Endothelial cell of umbilical vein (primary cell): ENCODE measurements at regions of chr12 and their contacts with region 1.

Region 1: DNA sequence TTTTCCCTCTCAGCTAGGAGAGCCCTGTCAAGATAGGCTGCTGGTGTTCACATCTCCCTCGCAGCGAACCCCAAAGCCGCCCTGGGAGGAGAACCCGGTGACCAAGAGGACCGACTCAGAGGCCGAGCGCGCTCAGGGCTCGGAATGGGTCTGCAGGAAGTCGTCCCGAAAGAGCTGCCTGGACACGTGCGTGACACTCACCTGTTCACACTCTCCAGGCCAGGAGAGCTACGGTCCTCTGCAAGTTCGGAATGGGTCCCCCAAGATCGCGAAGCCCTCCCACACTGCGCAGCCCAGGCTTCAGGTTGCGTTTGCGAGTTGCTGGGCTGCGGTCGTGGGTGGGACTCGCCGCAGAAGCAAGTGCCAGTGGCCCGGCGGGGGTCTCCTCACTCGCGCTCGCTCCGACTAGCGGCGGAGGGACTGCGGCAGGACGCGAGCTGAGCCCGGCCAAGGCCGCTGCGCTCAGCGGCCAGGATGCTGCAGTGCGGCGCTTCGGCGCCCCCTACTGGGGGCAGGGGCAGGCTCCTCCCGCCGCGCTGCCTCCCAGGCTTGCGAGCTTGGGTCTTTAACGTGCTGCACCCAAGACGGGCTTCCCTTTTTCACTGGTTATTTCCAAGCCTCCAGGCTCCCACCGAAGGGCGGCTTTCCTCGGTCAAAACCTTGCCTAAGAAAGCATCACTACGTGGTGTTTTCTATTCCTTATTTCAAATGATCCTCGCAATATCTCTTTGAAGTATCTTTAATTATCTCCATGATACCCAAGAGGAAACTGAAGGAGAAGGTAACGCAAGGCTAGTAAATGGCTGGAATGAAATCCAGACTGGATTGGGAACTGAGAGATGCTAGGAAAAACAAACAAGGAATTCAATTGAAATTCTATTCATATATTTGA is at the start of gene RERG:
- DNase-seq: peak; percentile 78
- H3K4me3 ChIP-seq: peak within 1 kb of the TSS in 2 of 3 experiments; percentile 3 to 32
- H3K27ac ChIP-seq: no peak within 1 kb of the TSS
- H3K4me1 ChIP-seq: peaks cover 7% of the 10 kb centered on the region
- H3K27me3 ChIP-seq: peaks cover 5 to 16% of the 10 kb centered on the region in 2 experiments
- CTCF ChIP-seq: peak; percentile 99
- POLR2A ChIP-seq: no peak
- total RNA-seq, gene RERG: not detected in 2 replicates

Region 2: GRCh38 chr12:14723763-14724162 is 497.5 kb before region 1 on chr12:
- CTCF ChIA-PET with region 1: interaction called, 56 read pairs
- POLR2A ChIA-PET with region 1: no interaction called
- dilution Hi-C with region 1: no loop called
- intact Hi-C with region 1: loop called (anchors 1 kb)
- DNase-seq: peak; percentile 56
- H3K4me3 ChIP-seq: no peak overlapping the region
- H3K27ac ChIP-seq: no peak overlapping the region
- H3K4me1 ChIP-seq: no peaks in the 10 kb centered on the region
- H3K27me3 ChIP-seq: peaks cover 0 to 2% of the 10 kb centered on the region in 2 experiments
- CTCF ChIP-seq: peak; percentile 57 to 75
- POLR2A ChIP-seq: no peak

Region 3: DNA sequence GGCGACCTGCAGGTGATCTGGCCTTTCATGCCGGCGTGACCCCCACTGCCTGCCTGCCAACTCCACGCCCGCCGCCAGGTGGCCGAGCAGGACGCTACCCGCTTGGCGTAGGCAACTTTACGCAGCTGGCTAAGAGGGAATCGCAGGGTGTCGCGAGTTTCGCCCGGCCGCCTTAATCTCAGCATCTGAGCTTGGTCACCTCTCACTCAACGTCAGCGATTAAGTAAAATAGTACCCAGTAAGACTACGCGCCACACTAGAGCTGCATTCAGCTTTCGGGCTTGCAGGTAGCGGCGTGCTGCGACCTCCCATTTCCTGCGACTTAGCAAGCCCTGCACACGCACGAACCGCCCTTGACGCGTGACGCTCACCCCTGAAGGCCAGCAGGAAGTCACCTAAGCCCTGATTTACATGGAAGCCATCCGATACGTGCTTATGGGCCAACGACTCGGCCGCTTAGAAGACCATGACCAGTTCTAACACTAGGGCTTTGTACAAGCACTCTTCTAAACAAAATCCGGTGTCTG is 451.2 kb before region 1 on chr12:
- CTCF ChIA-PET with region 1: interaction called, 15 read pairs
- POLR2A ChIA-PET with region 1: no interaction called
- dilution Hi-C with region 1: no loop called
- intact Hi-C with region 1: loop called (anchors 1 kb)
- DNase-seq: peak; percentile 77
- H3K4me3 ChIP-seq: peak overlapping the region; percentile 22 to 82 (median 70)
- H3K27ac ChIP-seq: peak overlapping the region; percentile 91
- H3K4me1 ChIP-seq: peaks cover 7% of the 10 kb centered on the region
- H3K27me3 ChIP-seq: no peaks in the 10 kb centered on the region
- CTCF ChIP-seq: peak; percentile 73 to 87
- POLR2A ChIP-seq: peak; percentile 25

Region 4: DNA sequence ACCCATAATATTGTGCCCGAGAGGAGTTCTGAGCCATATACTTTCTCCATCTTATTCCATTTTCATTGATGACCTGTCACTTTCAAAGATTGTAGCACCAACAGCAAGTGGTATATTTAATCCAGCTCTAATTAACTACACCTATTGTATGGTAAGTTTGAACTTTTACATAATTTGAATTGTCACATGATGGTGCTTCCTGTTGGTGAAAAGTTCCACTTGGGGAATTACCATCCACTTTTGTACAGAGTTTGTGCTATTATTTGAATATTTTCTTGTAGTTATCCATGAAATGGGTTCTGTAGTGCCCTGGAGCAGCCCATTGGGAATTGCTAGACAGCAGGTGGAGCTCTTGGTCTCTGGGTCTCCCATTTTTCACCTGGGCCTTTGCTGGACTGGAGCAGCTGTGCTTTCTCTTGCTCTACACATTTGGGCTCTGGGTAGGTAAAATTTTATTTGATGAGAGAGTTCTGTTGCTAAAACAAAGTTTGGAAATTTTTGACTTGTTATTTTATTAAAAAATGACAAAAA is 410.2 kb before region 1 on chr12:
- CTCF ChIA-PET with region 1: interaction called, 29 read pairs
- POLR2A ChIA-PET with region 1: no interaction called
- dilution Hi-C with region 1: no loop called
- intact Hi-C with region 1: loop called (anchors 1 kb)
- DNase-seq: peak; percentile 54
- H3K4me3 ChIP-seq: no peak overlapping the region
- H3K27ac ChIP-seq: no peak overlapping the region
- H3K4me1 ChIP-seq: no peaks in the 10 kb centered on the region
- H3K27me3 ChIP-seq: no peaks in the 10 kb centered on the region
- CTCF ChIP-seq: peak; percentile 57 to 61
- POLR2A ChIP-seq: no peak

Region 5: GRCh38 chr12:15151161-15152120 is 69.8 kb before region 1 on chr12:
- CTCF ChIA-PET with region 1: interaction called, 42 read pairs
- POLR2A ChIA-PET with region 1: no interaction called
- dilution Hi-C with region 1: no loop called
- intact Hi-C with region 1: loop called (anchors 1 kb)
- DNase-seq: peak; percentile 50
- H3K4me3 ChIP-seq: no peak overlapping the region
- H3K27ac ChIP-seq: no peak overlapping the region
- H3K4me1 ChIP-seq: no peaks in the 10 kb centered on the region
- H3K27me3 ChIP-seq: peaks cover 0 to 2% of the 10 kb centered on the region in 2 experiments
- CTCF ChIP-seq: peak; percentile 9 to 40
- POLR2A ChIP-seq: no peak

Region 6: DNA sequence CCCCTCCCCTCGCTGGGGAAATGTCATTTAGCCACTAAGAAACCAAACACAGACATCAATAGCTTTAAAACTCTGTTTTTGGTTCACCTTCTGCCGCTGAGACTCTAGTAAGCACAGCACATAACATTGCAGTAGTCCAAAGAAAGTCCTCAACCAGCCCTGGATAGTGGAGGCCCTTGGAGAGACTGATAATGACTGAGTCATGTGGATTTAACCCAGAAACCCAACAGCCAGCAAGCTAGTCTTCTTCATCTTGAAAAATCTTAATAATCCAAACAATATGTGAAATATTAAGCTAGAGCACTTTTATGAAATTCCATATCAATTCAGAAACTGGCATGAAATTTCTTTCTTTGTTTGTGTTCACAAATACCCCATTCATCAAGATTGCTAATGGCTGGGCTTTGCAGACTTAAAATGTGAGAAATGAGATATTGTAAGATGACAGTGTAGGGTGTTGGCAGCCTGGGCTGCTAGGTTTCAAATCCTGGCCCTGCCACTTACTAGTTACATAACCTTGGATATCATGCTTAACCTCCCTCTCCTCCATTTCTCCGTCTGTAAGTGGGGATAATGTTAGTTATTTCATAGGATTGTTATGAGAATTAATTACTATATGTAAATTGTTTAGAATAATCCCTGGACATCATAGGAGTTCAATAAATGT is 40.1 kb before region 1 on chr12:
- CTCF ChIA-PET with region 1: interaction called, 25 read pairs
- POLR2A ChIA-PET with region 1: no interaction called
- dilution Hi-C with region 1: no loop called
- intact Hi-C with region 1: no loop called
- DNase-seq: no peak
- H3K4me3 ChIP-seq: no peak overlapping the region
- H3K27ac ChIP-seq: no peak overlapping the region
- H3K4me1 ChIP-seq: no peaks in the 10 kb centered on the region
- H3K27me3 ChIP-seq: peaks cover 2 to 3% of the 10 kb centered on the region in 2 experiments
- CTCF ChIP-seq: no peak
- POLR2A ChIP-seq: no peak

Region 7: DNA sequence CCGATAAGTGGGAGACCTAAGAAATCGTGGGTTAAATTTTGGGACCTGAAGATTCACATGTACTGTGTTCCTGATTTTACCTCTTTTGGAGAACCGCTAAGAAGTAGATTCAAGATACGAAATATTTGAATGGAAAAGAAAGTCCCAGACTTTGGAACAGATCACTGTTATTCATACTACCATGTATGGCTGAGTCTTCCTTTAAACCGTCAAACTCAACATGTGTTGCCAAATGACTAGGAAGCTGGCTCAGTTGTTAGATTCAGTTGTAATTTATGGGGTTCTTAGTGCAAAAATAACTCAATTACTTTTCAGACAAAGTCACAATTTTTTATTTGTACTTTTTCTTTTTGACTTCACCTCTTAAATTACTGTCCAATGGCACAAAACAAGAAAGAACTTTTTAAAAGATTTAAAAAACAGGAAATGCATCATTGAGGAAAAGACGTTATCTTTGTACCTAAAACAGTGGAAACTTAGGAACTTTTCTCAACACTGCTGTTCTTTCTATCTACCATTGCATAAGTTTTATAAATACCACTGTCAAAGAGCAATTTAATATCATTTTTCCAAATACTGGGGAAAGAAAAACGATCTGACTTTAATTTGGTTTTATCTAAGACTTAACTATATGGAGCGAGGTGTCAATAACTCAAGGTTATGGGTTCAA is 15.8 kb before region 1 on chr12:
- CTCF ChIA-PET with region 1: interaction called, 34 read pairs
- POLR2A ChIA-PET with region 1: no interaction called
- dilution Hi-C with region 1: no loop called
- intact Hi-C with region 1: no loop called
- DNase-seq: peak; percentile 63
- H3K4me3 ChIP-seq: no peak overlapping the region
- H3K27ac ChIP-seq: no peak overlapping the region
- H3K4me1 ChIP-seq: no peaks in the 10 kb centered on the region
- H3K27me3 ChIP-seq: no peaks in the 10 kb centered on the region
- CTCF ChIP-seq: no peak
- POLR2A ChIP-seq: no peak